Activated CD4-positive, alpha-beta memory T cell treated with anti-CD3 and anti-CD28 coated beads for 36 hours (primary cell): ENCODE measurements at regions of chr4 and their contacts with region 1.

Region 1: GRCh38 chr4:168569066-168569970 is 72.5 kb downstream of the PALLD start:
- DNase-seq: peak; percentile 40
- H3K4me3 Mint-ChIP-seq: no peak overlapping the region
- H3K27ac Mint-ChIP-seq: no peak overlapping the region
- H3K4me1 Mint-ChIP-seq: peaks cover 12% of the 10 kb centered on the region
- H3K27me3 Mint-ChIP-seq: peaks cover 7% of the 10 kb centered on the region

Region 2: GRCh38 chr4:168540086-168540865 is 29.0 kb before region 1 on chr4:
- CTCF ChIA-PET with region 1: no interaction called
- POLR2A ChIA-PET with region 1: no interaction called
- intact Hi-C with region 1: loop called (anchors 1 kb)
- DNase-seq: peak; percentile 30
- H3K4me3 Mint-ChIP-seq: no peak overlapping the region
- H3K27ac Mint-ChIP-seq: peak overlapping the region; percentile 26
- H3K4me1 Mint-ChIP-seq: peaks cover 6% of the 10 kb centered on the region
- H3K27me3 Mint-ChIP-seq: peaks cover 2% of the 10 kb centered on the region

Region 3: GRCh38 chr4:169201222-169202144 is 632.2 kb after region 1 on chr4:
- CTCF ChIA-PET with region 1: no interaction called
- POLR2A ChIA-PET with region 1: no interaction called
- intact Hi-C with region 1: no loop called
- DNase-seq: no peak
- H3K4me3 Mint-ChIP-seq: no peak overlapping the region
- H3K27ac Mint-ChIP-seq: no peak overlapping the region
- H3K4me1 Mint-ChIP-seq: no peaks in the 10 kb centered on the region
- H3K27me3 Mint-ChIP-seq: no peaks in the 10 kb centered on the region